Left colon (tissue), 2 donors: ENCODE measurements at regions of chr14 and their contacts with region 1.

Region 1: GRCh38 chr14:103185051-103185992 is 62.1 kb downstream of the TNFAIP2 start:
- DNase-seq: no peak
- ATAC-seq: no peak

Region 2: GRCh38 chr14:103031956-103032355 is 153.4 kb before region 1 on chr14:
- intact Hi-C with region 1: no loop called
- DNase-seq: peak; percentile 41 to 54
- ATAC-seq: peak; percentile 30

Region 3: GRCh38 chr14:103104654-103105452 is 80.5 kb before region 1 on chr14:
- intact Hi-C with region 1: loop called in 1 of 2 experiments (anchors 10 kb)
- DNase-seq: peak in 1 of 2 donors; percentile 79
- ATAC-seq: peak; percentile 75

Region 4: DNA sequence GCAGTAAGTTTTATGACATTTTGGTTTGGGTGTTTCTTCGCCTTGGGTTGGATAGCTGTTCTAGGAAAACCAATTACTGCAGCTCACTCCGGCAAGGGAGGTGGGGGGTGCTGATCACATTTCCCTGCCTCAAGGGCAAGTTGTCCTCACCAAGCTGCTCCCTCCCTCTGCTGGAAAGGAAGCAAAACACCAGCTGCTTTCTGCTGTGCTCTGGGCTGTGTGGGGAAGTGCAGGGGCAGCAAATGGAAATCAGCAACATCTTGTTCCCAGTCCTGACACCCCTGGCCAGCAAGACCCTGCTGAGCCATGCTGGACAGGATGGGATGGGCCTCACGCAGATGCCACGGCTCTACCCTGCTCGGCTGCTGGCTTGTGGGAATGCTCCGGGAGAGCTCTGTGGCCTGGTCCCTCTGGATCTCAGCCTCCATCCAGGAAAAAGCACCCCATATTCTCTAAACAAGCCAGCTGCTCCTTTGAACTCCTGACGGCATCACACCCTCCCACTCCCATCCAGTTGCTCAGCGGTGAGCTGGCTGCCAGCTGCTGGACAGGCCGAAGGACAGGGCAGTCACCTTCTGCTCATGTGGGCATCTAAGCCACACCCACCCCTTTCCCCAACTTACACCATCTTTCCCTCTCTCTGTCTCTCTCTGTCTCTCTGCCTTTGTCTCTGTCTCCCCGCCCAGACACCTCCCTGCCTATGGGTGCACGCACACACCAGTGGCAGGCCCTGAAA is 96.3 kb after region 1 on chr14:
- intact Hi-C with region 1: loop called in 1 of 2 experiments (anchors 10 kb)
- DNase-seq: peak in 1 of 2 donors; percentile 27
- ATAC-seq: peak; percentile 76